Panc1 (cell line): ENCODE measurements at regions of chr3 and their contacts with region 1.

Region 1: GRCh38 chr3:126679318-126679751 is 24.4 kb upstream of the TXNRD3 start:
- DNase-seq: peak; percentile 60
- ATAC-seq: peak; percentile 96
- H3K4me3 ChIP-seq: no peak overlapping the region; a peak in 1 of 4 replicates
- H3K27ac ChIP-seq: no peak overlapping the region; the same call in 1 of the 2 replicates
- H3K4me1 ChIP-seq: peaks cover 13% of the 10 kb centered on the region
- H3K27me3 ChIP-seq: peaks cover 5% of the 10 kb centered on the region; the same call in 1 of the 2 replicates
- CTCF ChIP-seq: peak; percentile 98

Region 2: DNA sequence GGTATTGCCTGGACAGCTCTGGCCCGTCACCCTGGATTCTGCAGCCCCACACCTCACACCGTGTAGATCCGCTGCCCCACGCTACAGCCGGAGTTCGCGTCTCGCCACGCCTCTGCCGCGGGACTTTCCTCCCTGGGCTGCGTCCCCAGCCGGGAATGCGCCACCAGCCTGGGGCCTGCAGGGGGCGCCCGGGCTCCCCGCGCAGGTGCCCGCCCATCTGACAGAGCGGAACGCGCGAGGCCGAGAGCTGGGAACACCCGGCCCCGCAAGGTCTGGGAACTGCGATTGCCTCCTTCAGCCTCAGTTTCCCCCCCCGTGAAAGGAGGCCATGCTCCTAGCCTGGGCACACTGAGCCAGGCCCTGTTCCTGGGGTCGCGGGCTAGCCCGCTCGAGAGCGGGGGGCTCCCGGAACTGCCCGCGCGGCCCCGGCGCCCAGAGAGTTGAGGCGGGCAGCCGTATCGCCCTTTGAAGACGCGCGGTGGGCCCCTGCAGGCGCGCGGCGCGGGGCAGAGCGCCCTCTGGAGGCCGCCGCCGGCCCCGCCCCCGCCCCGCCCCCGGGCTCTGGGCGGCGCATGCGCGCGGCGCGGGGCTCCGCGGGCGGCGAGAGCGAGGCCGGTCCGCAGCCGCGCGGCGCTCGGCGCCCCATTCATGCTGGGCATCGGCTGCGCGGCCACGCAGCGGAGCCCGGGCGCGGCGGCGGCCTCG is 303.3 kb after region 1 on chr3 and contains the start of gene PLXNA1:
- CTCF ChIA-PET with region 1: interaction called, 3 read pairs
- POLR2A ChIA-PET with region 1: no interaction called
- in situ Hi-C with region 1: no loop called
- intact Hi-C with region 1: loop called (anchors 5 kb)
- DNase-seq: peak; percentile 41
- ATAC-seq: peak; percentile 88
- H3K4me3 ChIP-seq: peak within 1 kb of the TSS; percentile 64 to 75
- H3K27ac ChIP-seq: peak within 1 kb of the TSS; percentile 86
- H3K4me1 ChIP-seq: peaks cover 41% of the 10 kb centered on the region
- H3K27me3 ChIP-seq: no peaks in the 10 kb centered on the region
- CTCF ChIP-seq: peak; percentile 99
- total RNA-seq, gene PLXNA1: 80.6 TPM